ENCODE measurements at regions of chr18 and their contacts with region 1.

Region 1: DNA sequence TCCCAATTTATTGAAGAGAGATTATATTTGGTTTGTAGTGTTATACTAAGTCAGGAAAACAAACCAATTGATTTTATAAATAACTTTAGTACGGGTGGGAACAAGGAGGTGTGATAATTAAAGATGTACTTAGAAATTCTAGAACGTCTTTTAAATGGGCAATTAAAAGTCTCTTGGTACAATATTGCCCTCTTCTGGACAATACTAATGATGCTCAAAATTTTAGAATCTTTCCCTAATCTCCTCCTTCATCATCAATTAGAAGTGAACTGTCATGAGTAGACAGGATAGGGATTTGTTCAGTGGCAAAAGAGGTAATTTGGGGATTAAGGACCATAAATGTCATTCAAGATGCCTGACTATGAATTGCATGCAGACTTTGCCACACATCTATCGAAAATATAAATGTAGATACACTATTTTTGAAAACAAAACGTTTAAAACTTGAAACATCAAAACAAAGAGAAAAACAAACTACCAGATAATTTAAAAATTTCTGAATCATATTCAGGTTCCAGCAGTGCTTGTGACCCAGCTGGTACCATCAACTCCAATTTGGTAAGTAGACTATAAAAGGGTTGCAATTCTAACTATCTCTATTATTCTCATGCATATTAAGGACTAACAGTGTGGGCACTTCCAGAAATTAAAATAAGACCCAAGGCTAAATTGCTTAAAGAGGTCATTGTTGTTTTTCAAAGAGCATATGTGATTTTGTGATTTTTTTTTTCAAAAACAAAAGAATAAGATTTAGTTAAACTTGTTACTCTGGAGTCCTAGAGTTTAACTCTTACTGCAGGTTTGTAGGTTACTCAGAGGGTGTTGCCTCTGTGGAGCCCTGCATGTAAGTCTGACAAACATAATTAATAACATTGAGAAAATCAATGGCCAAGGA is 123.5 kb downstream of the LAMA3 start:
- DNase-seq: no peak
- ATAC-seq: peak; percentile 45
- H3K4me3 ChIP-seq: no peak overlapping the region
- H3K4me1 ChIP-seq: no peaks in the 10 kb centered on the region
- CTCF ChIP-seq: no peak

Region 2: DNA sequence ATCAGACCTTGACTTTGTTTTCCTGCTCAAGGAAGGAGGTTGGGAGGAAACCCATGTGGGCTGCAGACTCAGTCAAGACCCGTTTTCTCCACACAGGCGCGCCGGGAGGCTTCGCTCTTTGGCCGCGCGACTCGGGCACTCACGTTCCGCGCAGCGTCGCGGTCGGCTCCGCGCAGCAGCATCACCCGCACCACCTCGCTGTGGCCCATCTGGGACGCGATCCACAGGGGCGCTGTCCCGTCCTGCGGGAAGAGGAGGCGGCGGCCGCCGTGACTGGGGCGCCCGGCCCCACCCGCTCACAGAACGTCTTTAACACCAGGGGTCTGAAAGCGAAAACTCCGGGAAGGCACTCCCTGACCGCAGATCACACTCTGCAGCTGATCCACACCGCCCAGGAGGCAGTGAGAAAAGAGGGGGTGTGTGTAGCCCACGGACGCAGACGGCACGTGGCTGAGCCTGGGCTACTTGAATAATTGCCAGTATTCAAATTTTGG is 193.4 kb before region 1 on chr18:
- intact Hi-C with region 1: loop called (anchors 5 to 10 kb)
- DNase-seq: peak in 2 of 3 donors; percentile 14 to 51
- ATAC-seq: peak; percentile 62
- H3K4me3 ChIP-seq: no peak overlapping the region
- H3K4me1 ChIP-seq: no peaks in the 10 kb centered on the region
- CTCF ChIP-seq: no peak

Region 3: DNA sequence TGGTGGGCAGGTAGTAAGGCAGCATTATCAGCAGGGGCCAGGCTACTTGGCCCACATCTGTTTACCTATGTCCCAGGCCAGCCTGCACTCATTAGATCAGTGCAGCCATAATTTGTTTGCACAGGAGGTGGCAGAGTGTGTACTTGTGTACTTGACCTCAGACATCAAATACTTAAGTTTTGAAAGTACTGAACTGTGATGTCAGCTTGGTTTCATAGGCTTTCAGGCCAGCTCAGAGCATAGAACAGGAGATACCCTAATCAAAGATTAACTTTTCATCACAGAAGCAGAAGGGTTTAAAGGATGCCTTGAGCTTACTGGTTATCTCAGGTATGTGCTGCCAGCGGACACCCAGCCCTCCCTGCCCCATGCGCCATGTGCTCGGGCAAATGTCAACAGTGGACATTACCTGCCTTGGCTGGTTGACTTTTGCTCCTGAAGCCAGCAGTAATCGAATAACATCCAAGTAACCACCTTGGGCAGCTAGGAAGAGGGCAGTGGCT is 183.3 kb before region 1 on chr18:
- intact Hi-C with region 1: loop called (anchors 5 to 10 kb)
- DNase-seq: peak in 2 of 3 donors; percentile 25 to 47
- ATAC-seq: peak; percentile 86
- H3K4me3 ChIP-seq: no peak overlapping the region
- H3K4me1 ChIP-seq: peaks cover 10% of the 10 kb centered on the region
- CTCF ChIP-seq: no peak

Measured in mucosa of descending colon (tissue), 3 donors.